Right ventricle myocardium superior (tissue), 1 donor: ENCODE measurements at regions of chr22 and their contacts with region 1.

Region 1: DNA sequence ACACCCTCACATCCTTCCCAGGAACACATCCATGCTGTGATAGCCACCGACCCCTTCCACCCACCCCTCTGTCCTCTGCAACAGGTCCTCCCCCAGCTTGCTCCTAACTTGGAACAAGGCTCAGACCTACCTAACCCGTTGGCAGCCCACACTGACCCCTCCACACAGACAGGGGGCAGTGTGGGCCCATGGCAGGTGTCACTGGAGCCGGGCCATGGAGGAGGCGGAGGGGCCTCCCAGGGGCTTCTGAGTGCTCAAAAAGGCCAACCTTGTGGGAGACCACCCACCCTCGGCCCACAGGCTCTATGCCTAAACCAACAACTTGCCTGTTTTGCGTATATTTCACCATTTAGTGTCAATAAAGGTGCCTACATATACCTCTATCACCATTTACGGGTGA is 57.0 kb downstream of the CERK start:
- DNase-seq: no peak
- ATAC-seq: no peak

Region 2: DNA sequence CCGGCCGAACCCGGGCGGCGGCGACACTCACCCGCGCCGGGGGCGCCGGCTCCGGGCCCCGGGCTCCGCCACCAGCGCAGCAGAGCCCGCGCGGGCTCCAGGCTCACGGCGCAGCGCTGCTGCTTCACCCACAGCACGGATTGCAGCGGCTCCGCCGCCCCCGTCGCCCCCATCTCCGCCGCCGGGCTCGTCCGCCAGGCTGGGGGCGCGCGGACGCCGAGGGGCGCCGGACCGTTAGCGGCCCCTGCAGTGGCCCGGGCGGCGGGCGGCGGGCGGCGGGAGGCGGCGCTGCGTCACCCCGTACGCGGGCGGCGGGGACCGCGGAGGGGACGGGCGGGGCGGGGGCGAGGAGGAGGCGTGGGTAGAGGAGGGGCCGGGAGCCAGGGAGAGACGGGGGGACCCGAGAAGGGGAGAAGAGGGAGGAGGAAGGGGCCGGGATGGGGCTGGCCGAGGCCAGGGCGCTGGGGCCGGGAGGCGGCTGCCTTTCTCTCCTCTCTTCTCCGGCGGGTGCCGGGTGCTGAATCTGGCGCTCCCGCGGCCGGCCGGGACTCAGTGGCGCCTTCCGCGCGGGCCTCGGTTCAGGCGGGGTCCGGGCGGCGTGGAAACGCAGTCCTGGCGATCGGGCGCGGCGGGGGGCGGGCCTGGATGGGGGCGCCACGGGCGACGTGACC is 57.1 kb after region 1 on chr22 and contains the start of gene CERK:
- intact Hi-C with region 1: loop called (anchors 10 kb)
- DNase-seq: peak; percentile 84
- ATAC-seq: peak; percentile 80
- total RNA-seq, gene CERK: 69.0 TPM